Activated naive CD8-positive, alpha-beta T cell treated with anti-CD3 and anti-CD28 coated beads, Interleukin-2, amount 10 ng/mL, durations not matched to agents 7 days and 5 days (primary cell): ENCODE measurements at regions of chr20 and their contacts with region 1.

Region 1: GRCh38 chr20:4813863-4814695 is 92.4 kb downstream of the PRND start:
- DNase-seq: peak; percentile 58
- ATAC-seq: peak; percentile 77
- H3K4me3 Mint-ChIP-seq: peak overlapping the region; percentile 95
- H3K27ac Mint-ChIP-seq: peak overlapping the region; percentile 99
- H3K4me1 Mint-ChIP-seq: peaks cover 65% of the 10 kb centered on the region
- H3K27me3 Mint-ChIP-seq: no peaks in the 10 kb centered on the region

Region 2: GRCh38 chr20:4773736-4774135 is 40.3 kb before region 1 on chr20:
- POLR2A ChIA-PET with region 1: no interaction called
- DNase-seq: no peak
- ATAC-seq: no peak
- H3K4me3 Mint-ChIP-seq: no peak overlapping the region
- H3K27ac Mint-ChIP-seq: no peak overlapping the region
- H3K4me1 Mint-ChIP-seq: no peaks in the 10 kb centered on the region
- H3K27me3 Mint-ChIP-seq: peaks cover 5% of the 10 kb centered on the region

Region 3: DNA sequence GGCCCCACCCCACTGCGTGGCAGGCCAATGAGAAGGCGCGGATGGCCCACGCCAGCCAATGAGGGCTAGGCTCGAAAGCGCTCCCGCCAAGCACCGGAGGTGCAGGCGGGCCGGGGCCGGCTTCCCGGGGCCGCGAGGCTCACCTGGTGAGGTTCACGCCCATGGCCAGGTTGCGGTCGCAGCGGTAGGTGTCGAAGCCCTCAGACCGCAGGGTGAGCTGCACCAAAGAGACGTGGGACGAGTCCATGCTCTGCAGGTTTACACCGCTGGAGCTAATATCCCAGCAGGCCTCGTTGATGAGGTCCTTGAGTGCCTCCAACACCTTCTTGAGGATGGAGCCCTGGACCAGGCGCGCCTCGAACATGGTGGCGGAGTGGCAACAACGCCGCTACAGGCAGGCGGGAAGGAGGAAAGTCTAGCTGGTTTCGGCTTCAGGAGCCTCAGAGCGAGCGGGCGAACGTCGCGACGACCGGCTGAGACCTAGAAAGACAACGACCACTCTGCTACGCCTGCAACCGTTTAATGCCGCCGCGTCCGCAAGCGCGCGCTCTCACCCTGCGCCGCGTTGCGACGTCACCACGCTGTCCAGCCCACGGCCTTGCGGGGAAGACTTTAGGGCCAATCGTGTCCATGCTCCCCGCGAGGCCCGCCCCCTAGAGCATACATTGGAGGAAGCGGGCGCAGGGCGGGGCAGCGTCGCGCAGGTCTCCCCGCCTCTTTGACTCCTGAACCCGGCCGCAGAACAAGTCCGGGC is 305.5 kb after region 1 on chr20 and contains the start of gene PCNA:
- POLR2A ChIA-PET with region 1: interaction called, 10 read pairs
- DNase-seq: peak; percentile 97
- ATAC-seq: peak; percentile 90
- H3K4me3 Mint-ChIP-seq: peak within 1 kb of the TSS; percentile 96
- H3K27ac Mint-ChIP-seq: peak within 1 kb of the TSS; percentile 97
- H3K4me1 Mint-ChIP-seq: peaks cover 45% of the 10 kb centered on the region
- H3K27me3 Mint-ChIP-seq: no peaks in the 10 kb centered on the region
- total RNA-seq, gene PCNA: 393 to 421 TPM